Posterior vena cava (tissue), 2 donors: ENCODE measurements at regions of chr6 and their contacts with region 1.

Region 1: GRCh38 chr6:141123049-141123448 is 1009.7 kb upstream of the GJE1 start:
- DNase-seq: no peak

Region 2: DNA sequence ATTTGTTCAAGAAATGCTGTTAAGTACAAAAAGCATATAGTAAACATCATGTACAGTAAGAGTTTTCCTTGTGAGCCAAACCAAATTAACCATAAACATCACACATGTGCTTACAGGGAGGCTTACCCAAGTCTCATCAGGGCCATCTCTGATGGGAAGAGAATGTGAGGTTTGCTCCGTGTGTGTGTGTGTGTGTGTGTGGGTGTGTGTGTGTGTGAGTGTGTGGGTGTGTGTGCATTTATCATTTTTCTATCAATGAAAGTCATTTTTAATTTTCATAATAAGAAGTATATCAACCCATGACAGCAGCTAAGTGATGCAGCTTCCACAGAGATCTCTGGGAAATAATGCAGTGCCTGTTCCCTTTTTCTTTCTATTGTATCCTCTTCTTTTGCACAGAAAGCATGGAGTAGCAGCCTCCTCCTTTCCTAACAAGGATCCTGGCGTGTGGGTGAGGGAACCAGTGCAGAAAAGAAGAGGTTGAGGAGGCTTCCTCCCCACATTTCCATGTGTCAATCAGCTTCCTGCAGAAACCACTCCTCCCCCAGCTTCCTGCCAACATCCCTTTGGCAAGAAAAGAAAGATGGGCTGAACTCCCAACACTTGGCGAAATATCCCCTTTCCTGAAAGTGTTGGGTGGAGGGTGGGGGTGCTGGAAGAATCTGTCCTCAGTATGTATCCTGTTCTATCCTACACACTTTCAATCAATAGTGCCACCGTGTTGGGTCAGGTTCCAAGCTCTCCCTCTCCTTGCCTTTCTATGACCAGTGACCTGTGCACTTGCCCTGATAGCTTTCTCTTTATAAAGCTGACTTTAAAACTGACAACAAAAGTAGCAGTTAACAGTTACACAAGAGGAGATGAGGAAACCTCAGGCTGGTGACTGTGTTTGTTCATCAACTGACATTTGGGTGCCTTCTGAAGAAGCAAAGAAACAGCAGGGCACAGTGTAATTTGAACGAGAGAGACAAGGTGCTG is 1496.8 kb before region 1 on chr6:
- intact Hi-C with region 1: loop called in 1 of 2 experiments (anchors 5 kb)
- DNase-seq: no peak